A549 (cell line): ENCODE measurements at regions of chr10 and their contacts with region 1.

Region 1: GRCh38 chr10:93554760-93555432 is 11.6 kb upstream of the FFAR4 start:
- DNase-seq: peak; percentile 76 to 82
- ATAC-seq: peak; percentile 88 to 96
- H3K4me3 ChIP-seq: no peak overlapping the region
- H3K27ac ChIP-seq: peak overlapping the region; percentile 19 to 71; a peak in 5 of 6 replicates
- H3K4me1 ChIP-seq: peaks cover 31% of the 10 kb centered on the region
- CTCF ChIP-seq: peak; percentile 71
- EP300 ChIP-seq: no peak
- POLR2A ChIP-seq: no peak
- RAD21 ChIP-seq: peak; percentile 69 to 81

Region 2: GRCh38 chr10:93541402-93542357 is 13.2 kb before region 1 on chr10:
- CTCF ChIA-PET with region 1: interaction called, 16 read pairs
- POLR2A ChIA-PET with region 1: no interaction called
- DNase-seq: peak in 1 of 2 experiments; percentile 56
- ATAC-seq: peak; percentile 97 to 98
- H3K4me3 ChIP-seq: no peak overlapping the region
- H3K27ac ChIP-seq: no peak overlapping the region; a peak in 1 of 6 replicates
- H3K4me1 ChIP-seq: peaks cover 16% of the 10 kb centered on the region
- CTCF ChIP-seq: peak; percentile 86
- EP300 ChIP-seq: no peak
- POLR2A ChIP-seq: no peak
- RAD21 ChIP-seq: peak; percentile 76

Region 3: GRCh38 chr10:93566435-93567276 is 11.8 kb after region 1 on chr10 and contains the start of gene FFAR4:
- CTCF ChIA-PET with region 1: interaction called, 16 read pairs
- POLR2A ChIA-PET with region 1: interaction called, 6 read pairs
- DNase-seq: peak; percentile 50 to 60
- ATAC-seq: peak; percentile 70 to 84; a peak in 5 of 6 replicates
- H3K4me3 ChIP-seq: peak within 1 kb of the TSS; percentile 33
- H3K27ac ChIP-seq: peak within 1 kb of the TSS; percentile 44 to 67; a peak in 5 of 6 replicates
- H3K4me1 ChIP-seq: no peaks in the 10 kb centered on the region
- CTCF ChIP-seq: no peak
- EP300 ChIP-seq: no peak
- POLR2A ChIP-seq: peak; percentile 28; the same call in 1 of the 2 replicates
- RAD21 ChIP-seq: no peak
- polyA plus RNA-seq, gene FFAR4: 0.17 and 0.25 TPM in 2 replicates

Region 4: GRCh38 chr10:93680412-93681047 is 125.6 kb after region 1 on chr10:
- CTCF ChIA-PET with region 1: interaction called, 131 read pairs
- POLR2A ChIA-PET with region 1: no interaction called
- DNase-seq: peak; percentile 40 to 69
- ATAC-seq: peak; percentile 70 to 80; a peak in 5 of 6 replicates
- H3K4me3 ChIP-seq: no peak overlapping the region
- H3K27ac ChIP-seq: no peak overlapping the region
- H3K4me1 ChIP-seq: no peaks in the 10 kb centered on the region
- CTCF ChIP-seq: peak; percentile 89
- EP300 ChIP-seq: no peak
- POLR2A ChIP-seq: no peak
- RAD21 ChIP-seq: peak; percentile 91 to 92